ENCODE measurements at regions of chr4 and their contacts with region 1.

Region 1: GRCh38 chr4:15001869-15002658 is at the start of gene CPEB2:
- DNase-seq: peak; percentile 81
- ATAC-seq: peak; percentile 80
- H3K4me3 ChIP-seq: peak within 1 kb of the TSS; percentile 93
- H3K27ac ChIP-seq: peak within 1 kb of the TSS; percentile 96
- H3K4me1 ChIP-seq: no peaks in the 10 kb centered on the region
- H3K27me3 ChIP-seq: no peaks in the 10 kb centered on the region
- CTCF ChIP-seq: no peak
- EP300 ChIP-seq: 0 out of 4 replicates have a peak, but pooled peaks of 1 of the 2 experiments have one; percentile 3
- POLR2A ChIP-seq: peak; percentile 92
- RAD21 ChIP-seq: peak; percentile 8; the same call in 1 of the 2 replicates
- polyA plus RNA-seq, gene CPEB2: 0.84 to 1.4 TPM

Region 2: GRCh38 chr4:13627606-13628301 is 1374.3 kb before region 1 on chr4 and contains the start of gene BOD1L1:
- CTCF ChIA-PET with region 1: no interaction called
- POLR2A ChIA-PET with region 1: no interaction called
- RAD21 ChIA-PET with region 1: no interaction called
- SMC1A ChIA-PET with region 1: no interaction called
- in situ Hi-C with region 1: no loop called
- intact Hi-C with region 1: loop called (anchors 10 kb)
- DNase-seq: peak; percentile 60
- ATAC-seq: peak; percentile 88
- H3K4me3 ChIP-seq: peak within 1 kb of the TSS; percentile 92
- H3K27ac ChIP-seq: peak within 1 kb of the TSS; percentile 90
- H3K4me1 ChIP-seq: no peaks in the 10 kb centered on the region
- H3K27me3 ChIP-seq: no peaks in the 10 kb centered on the region
- CTCF ChIP-seq: peak; percentile 57 to 62 (median 58)
- EP300 ChIP-seq: peak in 1 of 2 experiments; percentile 49; a peak in 2 of 4 replicates
- POLR2A ChIP-seq: peak; percentile 95
- RAD21 ChIP-seq: 0 out of 2 replicates have a peak, but pooled peaks have one; percentile 29
- polyA plus RNA-seq, gene BOD1L1: 6.8 to 12.1 TPM

Region 3: GRCh38 chr4:14345356-14345775 is 656.7 kb before region 1 on chr4:
- CTCF ChIA-PET with region 1: no interaction called
- POLR2A ChIA-PET with region 1: no interaction called
- RAD21 ChIA-PET with region 1: no interaction called
- SMC1A ChIA-PET with region 1: no interaction called
- in situ Hi-C with region 1: no loop called
- intact Hi-C with region 1: no loop called
- DNase-seq: no peak
- ATAC-seq: peak; percentile 63
- H3K4me3 ChIP-seq: no peak overlapping the region
- H3K27ac ChIP-seq: no peak overlapping the region
- H3K4me1 ChIP-seq: no peaks in the 10 kb centered on the region
- H3K27me3 ChIP-seq: no peaks in the 10 kb centered on the region
- CTCF ChIP-seq: no peak
- EP300 ChIP-seq: no peak
- POLR2A ChIP-seq: no peak
- RAD21 ChIP-seq: no peak

Region 4: DNA sequence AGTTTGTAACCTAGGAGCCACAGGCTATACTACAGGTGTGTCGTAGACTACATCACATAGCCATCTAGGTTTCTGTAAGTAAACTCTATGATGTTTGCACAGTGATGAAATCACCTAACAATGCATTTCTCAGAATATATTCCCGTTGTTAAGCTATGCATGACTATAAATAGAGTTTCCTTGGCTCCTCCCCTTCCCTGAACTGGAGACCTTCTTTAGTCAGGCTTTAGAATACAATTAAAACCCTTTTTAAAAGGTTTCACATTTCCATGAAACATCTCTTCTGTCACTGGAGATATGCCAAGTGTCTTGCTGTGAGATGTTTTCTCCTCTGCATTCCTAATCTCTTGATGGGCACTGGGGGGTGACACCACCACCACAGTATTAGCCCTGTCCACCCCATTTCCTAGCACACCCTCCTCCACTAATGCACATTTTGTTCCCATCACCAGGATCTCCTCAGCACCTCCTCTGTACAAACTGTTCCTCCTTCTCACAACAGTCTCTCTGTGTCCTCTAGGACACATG is 334.4 kb before region 1 on chr4:
- CTCF ChIA-PET with region 1: no interaction called
- POLR2A ChIA-PET with region 1: no interaction called
- RAD21 ChIA-PET with region 1: no interaction called
- SMC1A ChIA-PET with region 1: no interaction called
- in situ Hi-C with region 1: no loop called
- intact Hi-C with region 1: no loop called
- DNase-seq: no peak
- ATAC-seq: no peak
- H3K4me3 ChIP-seq: no peak overlapping the region
- H3K27ac ChIP-seq: no peak overlapping the region
- H3K4me1 ChIP-seq: no peaks in the 10 kb centered on the region
- H3K27me3 ChIP-seq: no peaks in the 10 kb centered on the region; a peak in 1 of 4 replicates
- CTCF ChIP-seq: no peak
- EP300 ChIP-seq: no peak
- POLR2A ChIP-seq: no peak
- RAD21 ChIP-seq: no peak

Region 5: GRCh38 chr4:14787894-14788293 is 214.2 kb before region 1 on chr4:
- CTCF ChIA-PET with region 1: no interaction called
- POLR2A ChIA-PET with region 1: no interaction called
- RAD21 ChIA-PET with region 1: no interaction called
- SMC1A ChIA-PET with region 1: no interaction called
- in situ Hi-C with region 1: no loop called
- intact Hi-C with region 1: loop called (anchors 10 kb)
- DNase-seq: no peak
- ATAC-seq: peak; percentile 50
- H3K4me3 ChIP-seq: no peak overlapping the region
- H3K27ac ChIP-seq: no peak overlapping the region
- H3K4me1 ChIP-seq: 0 out of 2 replicates have a peak, but pooled peaks cover 3% of the 10 kb centered on the region
- H3K27me3 ChIP-seq: no peaks in the 10 kb centered on the region
- CTCF ChIP-seq: peak in 2 of 3 experiments; percentile 34 to 46; a peak in 3 of 6 replicates
- EP300 ChIP-seq: no peak
- POLR2A ChIP-seq: no peak
- RAD21 ChIP-seq: peak; percentile 44

Region 6: DNA sequence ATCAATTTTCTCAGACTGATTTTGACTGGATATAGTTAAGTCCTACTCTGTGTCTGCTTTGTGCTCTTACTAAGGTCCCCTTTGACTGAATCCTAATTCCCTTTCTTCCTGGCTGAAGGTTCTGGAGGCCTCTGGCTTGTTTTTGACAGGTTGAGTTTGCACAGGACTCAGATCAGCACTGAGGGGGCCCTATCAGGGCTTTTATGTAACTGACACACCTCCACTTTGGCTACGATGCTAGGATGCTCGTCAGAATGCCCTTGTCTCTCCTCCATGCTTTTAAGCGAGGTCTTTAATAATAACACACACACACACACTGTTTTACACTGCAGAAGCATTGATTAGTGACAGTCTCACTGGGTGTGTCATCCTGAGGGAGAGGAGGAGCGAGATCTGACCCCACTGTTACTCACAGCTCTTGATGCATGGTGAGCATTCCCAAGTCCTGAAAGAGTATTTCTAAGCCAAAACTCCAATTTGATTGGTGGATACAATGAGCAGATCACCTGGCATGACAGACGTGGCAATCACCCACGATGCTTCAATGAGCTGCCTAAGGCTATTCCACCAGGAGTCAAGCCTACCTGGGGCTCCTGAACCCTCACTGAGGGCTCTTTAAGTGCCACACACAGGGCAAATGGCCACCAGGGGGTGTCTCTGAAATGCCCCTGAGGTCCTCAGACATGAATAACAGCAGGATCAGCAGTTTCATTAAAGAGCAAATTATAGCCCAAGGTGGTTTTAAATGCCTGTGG is 130.2 kb before region 1 on chr4:
- CTCF ChIA-PET with region 1: interaction called, 4 read pairs
- POLR2A ChIA-PET with region 1: no interaction called
- RAD21 ChIA-PET with region 1: interaction called, 3 read pairs
- SMC1A ChIA-PET with region 1: interaction called, 4 read pairs
- in situ Hi-C with region 1: loop called (anchors 10 kb)
- intact Hi-C with region 1: loop called (anchors 2 kb)
- DNase-seq: no peak
- ATAC-seq: peak; percentile 64
- H3K4me3 ChIP-seq: no peak overlapping the region
- H3K27ac ChIP-seq: no peak overlapping the region
- H3K4me1 ChIP-seq: peaks cover 26% of the 10 kb centered on the region
- H3K27me3 ChIP-seq: no peaks in the 10 kb centered on the region
- CTCF ChIP-seq: peak; percentile 29 to 57 (median 45); a peak in 5 of 6 replicates
- EP300 ChIP-seq: no peak
- POLR2A ChIP-seq: no peak
- RAD21 ChIP-seq: peak; percentile 57

Region 7: DNA sequence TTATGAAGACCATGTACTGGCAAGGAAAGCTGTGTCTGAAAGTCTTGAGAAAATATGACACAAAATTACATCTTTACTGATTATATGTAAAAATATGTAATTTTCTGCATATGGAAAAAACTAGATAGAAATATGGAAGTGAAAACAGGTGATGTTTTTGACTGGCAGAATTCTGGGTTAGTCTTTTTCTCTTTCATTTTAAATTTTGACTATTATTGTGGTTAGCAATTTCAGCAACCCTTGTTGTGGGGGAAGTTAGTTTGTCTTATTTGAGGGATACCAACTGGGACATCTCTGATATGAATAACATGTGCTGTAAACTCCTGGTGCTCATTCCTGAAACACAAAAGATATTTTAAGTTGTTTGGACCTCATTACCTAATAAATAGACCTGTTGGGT is 49.7 kb before region 1 on chr4:
- CTCF ChIA-PET with region 1: no interaction called
- POLR2A ChIA-PET with region 1: no interaction called
- RAD21 ChIA-PET with region 1: no interaction called
- SMC1A ChIA-PET with region 1: no interaction called
- in situ Hi-C with region 1: no loop called
- intact Hi-C with region 1: no loop called
- DNase-seq: no peak
- ATAC-seq: peak; percentile 63
- H3K4me3 ChIP-seq: no peak overlapping the region
- H3K27ac ChIP-seq: no peak overlapping the region
- H3K4me1 ChIP-seq: no peaks in the 10 kb centered on the region
- H3K27me3 ChIP-seq: no peaks in the 10 kb centered on the region
- CTCF ChIP-seq: no peak
- EP300 ChIP-seq: 0 out of 4 replicates have a peak, but pooled peaks of 1 of the 2 experiments have one; percentile 18
- POLR2A ChIP-seq: no peak
- RAD21 ChIP-seq: no peak

Region 8: GRCh38 chr4:15649914-15650545 is 648.0 kb after region 1 on chr4:
- CTCF ChIA-PET with region 1: no interaction called
- POLR2A ChIA-PET with region 1: no interaction called
- RAD21 ChIA-PET with region 1: no interaction called
- SMC1A ChIA-PET with region 1: no interaction called
- in situ Hi-C with region 1: loop called (anchors 10 kb)
- intact Hi-C with region 1: loop called (anchors 5 kb)
- DNase-seq: peak; percentile 45
- ATAC-seq: peak; percentile 75
- H3K4me3 ChIP-seq: 0 out of 2 replicates have a peak overlapping the region, but pooled peaks have one; percentile 31
- H3K27ac ChIP-seq: no peak overlapping the region
- H3K4me1 ChIP-seq: peaks cover 25% of the 10 kb centered on the region
- H3K27me3 ChIP-seq: no peaks in the 10 kb centered on the region
- CTCF ChIP-seq: peak; percentile 63 to 80 (median 78)
- EP300 ChIP-seq: no peak
- POLR2A ChIP-seq: no peak
- RAD21 ChIP-seq: peak; percentile 87

Region 9: GRCh38 chr4:15778289-15779241 is 776.5 kb after region 1 on chr4 and contains the start of gene CD38:
- CTCF ChIA-PET with region 1: no interaction called
- POLR2A ChIA-PET with region 1: no interaction called
- RAD21 ChIA-PET with region 1: no interaction called
- SMC1A ChIA-PET with region 1: no interaction called
- in situ Hi-C with region 1: no loop called
- intact Hi-C with region 1: loop called (anchors 10 kb)
- DNase-seq: no peak
- ATAC-seq: peak; percentile 85
- H3K4me3 ChIP-seq: peak within 1 kb of the TSS; percentile 72
- H3K27ac ChIP-seq: peak within 1 kb of the TSS; percentile 78
- H3K4me1 ChIP-seq: peaks cover 36% of the 10 kb centered on the region
- H3K27me3 ChIP-seq: peaks cover 0 to 3% of the 10 kb centered on the region in 2 experiments; a peak in 1 of 4 replicates
- CTCF ChIP-seq: 0 out of 6 replicates have a peak, but pooled peaks of 2 of the 3 experiments have one; percentile 7 to 15
- EP300 ChIP-seq: peak; percentile 65 to 77
- POLR2A ChIP-seq: peak; percentile 78
- RAD21 ChIP-seq: no peak
- polyA plus RNA-seq, gene CD38: 3.5 to 4.8 TPM

Measured in GM12878 (cell line).